Calu3 (cell line): ENCODE measurements at regions of chr15 and their contacts with region 1.

Region 1: DNA sequence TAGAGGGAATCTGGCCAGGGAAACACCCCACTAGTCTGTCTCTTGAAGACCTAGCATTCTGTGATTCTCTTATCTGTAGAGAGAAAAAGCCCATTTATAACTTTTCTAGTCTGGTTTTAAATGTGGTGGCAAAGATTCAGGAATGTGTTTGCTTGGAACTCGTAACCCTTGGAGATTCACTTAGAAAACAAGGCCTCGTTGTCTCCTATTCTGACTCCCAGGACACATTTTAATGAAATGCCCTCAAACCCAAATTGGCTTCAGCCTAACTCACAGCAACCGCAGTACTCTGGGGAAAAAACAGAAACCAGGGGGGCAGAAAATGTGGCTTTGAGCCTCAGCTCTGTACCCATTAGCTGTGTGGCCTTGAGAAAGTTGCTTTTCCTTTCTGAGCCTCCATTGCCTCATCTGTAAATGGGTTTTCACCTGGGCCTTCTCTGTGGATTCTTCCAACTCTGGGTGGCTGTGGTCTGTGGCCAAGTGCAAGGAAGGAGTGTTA is 36.5 kb downstream of the RPLP1 start:
- DNase-seq: no peak
- H3K4me3 Mint-ChIP-seq: no peak overlapping the region
- H3K27ac Mint-ChIP-seq: no peak overlapping the region
- H3K4me1 Mint-ChIP-seq: no peaks in the 10 kb centered on the region
- H3K27me3 Mint-ChIP-seq: peaks cover 19% of the 10 kb centered on the region
- CTCF ChIP-seq: no peak

Region 2: DNA sequence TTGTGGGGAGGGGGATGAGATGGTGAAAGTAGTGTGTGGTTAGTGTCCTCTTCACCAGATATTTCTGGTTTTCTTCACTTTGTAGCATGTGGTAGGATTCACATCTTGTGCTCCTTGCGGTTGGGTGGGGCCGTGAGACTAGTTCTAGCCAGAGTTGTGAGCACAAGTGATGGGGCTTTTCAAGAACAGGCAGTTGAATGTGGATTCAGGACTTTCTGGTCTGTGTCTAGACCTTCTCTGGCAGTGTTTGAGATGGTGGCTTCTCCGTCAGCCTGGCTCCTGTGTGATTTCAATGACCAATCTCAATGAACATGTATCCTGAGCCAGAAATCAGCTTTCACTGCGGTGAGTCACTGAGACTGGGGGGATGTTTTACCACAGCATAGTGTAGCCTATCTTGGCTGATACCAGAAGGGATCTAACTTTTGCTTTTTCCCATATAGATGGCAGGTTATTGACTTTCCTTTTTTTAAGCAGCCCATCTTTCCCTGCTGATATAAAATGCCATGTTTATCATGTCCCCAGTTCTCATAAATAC is 46.0 kb after region 1 on chr15:
- CTCF ChIA-PET with region 1: no interaction called
- intact Hi-C with region 1: no loop called
- DNase-seq: no peak
- H3K4me3 Mint-ChIP-seq: no peak overlapping the region
- H3K27ac Mint-ChIP-seq: no peak overlapping the region
- H3K4me1 Mint-ChIP-seq: no peaks in the 10 kb centered on the region
- H3K27me3 Mint-ChIP-seq: peaks cover 24% of the 10 kb centered on the region
- CTCF ChIP-seq: no peak

Region 3: GRCh38 chr15:69660658-69661405 is 171.7 kb after region 1 on chr15:
- CTCF ChIA-PET with region 1: interaction called, 13 read pairs
- intact Hi-C with region 1: no loop called
- DNase-seq: no peak
- H3K4me3 Mint-ChIP-seq: no peak overlapping the region
- H3K27ac Mint-ChIP-seq: no peak overlapping the region
- H3K4me1 Mint-ChIP-seq: no peaks in the 10 kb centered on the region
- H3K27me3 Mint-ChIP-seq: peaks cover 29% of the 10 kb centered on the region
- CTCF ChIP-seq: no peak